ENCODE measurements at regions of chr2 and their contacts with region 1.

Region 1: GRCh38 chr2:31003749-31004148 is 134.5 kb downstream of the GALNT14 start:
- DNase-seq: no peak
- ATAC-seq: no peak

Region 2: DNA sequence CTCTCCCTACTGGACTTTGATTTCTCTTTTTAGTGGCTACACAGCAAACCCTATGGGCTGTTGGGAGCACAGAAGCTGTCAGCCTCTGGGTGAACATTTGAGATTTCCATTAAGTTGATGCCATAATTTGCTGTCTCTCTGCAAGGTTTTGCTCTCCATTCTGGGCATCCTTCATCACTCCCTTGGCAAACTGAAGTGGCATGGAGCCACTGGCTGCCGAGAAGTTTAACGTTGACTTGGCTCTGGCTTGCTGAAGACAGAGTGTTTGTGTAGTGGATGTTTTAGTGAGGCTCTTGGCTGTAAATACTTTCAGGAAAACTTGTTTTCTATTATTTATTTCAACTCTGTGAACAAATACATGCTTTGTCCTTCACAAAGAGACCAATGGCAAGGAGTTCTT is 1173.9 kb before region 1 on chr2:
- intact Hi-C with region 1: loop called (anchors 5 kb)
- DNase-seq: no peak
- ATAC-seq: no peak

Region 3: GRCh38 chr2:31170071-31170698 is 166.4 kb after region 1 on chr2:
- intact Hi-C with region 1: no loop called
- DNase-seq: no peak
- ATAC-seq: peak; percentile 80

Region 4: DNA sequence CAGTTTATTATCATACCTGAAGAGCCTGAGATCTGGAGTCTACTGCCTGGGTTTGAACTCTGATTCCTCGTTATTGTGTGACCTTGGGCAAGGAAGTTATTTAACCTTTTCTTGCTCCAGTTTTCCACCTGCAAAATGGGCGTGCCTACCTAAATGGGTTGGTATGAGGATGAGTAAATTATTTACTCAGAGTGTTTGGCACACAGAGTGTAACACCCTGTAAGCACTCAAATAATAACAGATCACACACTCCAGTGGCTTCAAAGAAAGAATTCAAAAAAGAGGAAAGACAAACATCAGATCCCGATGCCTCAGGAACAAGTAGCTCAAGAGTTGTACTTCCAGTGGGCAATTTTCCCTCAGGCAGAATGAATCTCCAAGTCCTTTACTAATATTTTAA is 574.6 kb after region 1 on chr2:
- intact Hi-C with region 1: no loop called
- DNase-seq: no peak
- ATAC-seq: no peak